Activated B cell treated with CpG ODN at 0.5 μM for 24 hours (primary cell): ENCODE measurements at regions of chr5 and their contacts with region 1.

Region 1: GRCh38 chr5:176508603-176509002 is 28.6 kb downstream of the RNF44 start:
- DNase-seq: no peak
- ATAC-seq: no peak
- H3K4me3 Mint-ChIP-seq: no peak overlapping the region
- H3K27ac Mint-ChIP-seq: no peak overlapping the region
- H3K4me1 Mint-ChIP-seq: no peaks in the 10 kb centered on the region
- H3K27me3 Mint-ChIP-seq: no peaks in the 10 kb centered on the region
- CTCF ChIP-seq: no peak

Region 2: GRCh38 chr5:176415231-176415951 is 93.2 kb before region 1 on chr5:
- CTCF ChIA-PET with region 1: no interaction called
- POLR2A ChIA-PET with region 1: no interaction called
- intact Hi-C with region 1: no loop called
- DNase-seq: no peak
- ATAC-seq: no peak
- H3K4me3 Mint-ChIP-seq: peak overlapping the region; percentile 80
- H3K27ac Mint-ChIP-seq: peak overlapping the region; percentile 56
- H3K4me1 Mint-ChIP-seq: peaks cover 26% of the 10 kb centered on the region
- H3K27me3 Mint-ChIP-seq: peaks cover 3% of the 10 kb centered on the region
- CTCF ChIP-seq: no peak

Region 3: DNA sequence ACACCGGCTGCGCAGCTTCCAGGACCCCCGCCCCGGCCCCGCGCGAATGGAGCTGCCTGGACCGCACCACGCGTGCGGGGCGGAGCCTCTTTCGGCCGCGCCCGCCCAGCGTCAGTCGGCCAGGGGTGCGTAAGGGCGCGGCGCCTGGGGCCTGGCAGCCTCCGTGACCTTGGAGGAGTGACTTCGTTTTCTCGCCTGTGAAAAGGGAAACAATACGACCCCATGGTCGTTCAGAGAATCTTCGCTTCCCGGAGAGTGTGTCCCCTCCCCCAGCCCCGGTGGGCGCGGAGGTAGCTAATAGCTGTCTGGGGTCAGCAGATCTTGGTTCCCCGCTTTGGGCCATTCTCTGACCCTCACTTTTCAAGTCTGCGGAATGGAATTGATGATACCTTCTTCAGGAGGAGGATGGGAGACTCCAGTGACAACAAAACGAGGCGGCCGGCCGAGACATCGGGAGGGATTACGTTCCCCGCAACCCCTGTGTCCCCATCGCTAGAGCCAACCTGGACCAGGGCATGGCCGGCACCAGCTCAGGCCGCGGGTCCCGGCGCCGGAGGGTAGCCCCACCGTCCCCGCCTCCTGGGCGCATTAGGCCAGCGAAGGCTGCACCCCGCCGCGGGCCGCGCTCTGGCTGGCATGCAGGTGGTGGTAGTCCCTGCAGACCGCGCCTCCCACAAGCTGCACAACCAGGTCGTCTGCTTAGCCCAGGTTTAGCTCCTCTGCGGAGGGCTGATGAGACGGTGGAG is 35.0 kb after region 1 on chr5:
- CTCF ChIA-PET with region 1: no interaction called
- POLR2A ChIA-PET with region 1: no interaction called
- intact Hi-C with region 1: loop called (anchors 5 kb)
- DNase-seq: peak; percentile 76
- ATAC-seq: peak; percentile 80
- H3K4me3 Mint-ChIP-seq: peak overlapping the region; percentile 93
- H3K27ac Mint-ChIP-seq: peak overlapping the region; percentile 94
- H3K4me1 Mint-ChIP-seq: peaks cover 44% of the 10 kb centered on the region
- H3K27me3 Mint-ChIP-seq: no peaks in the 10 kb centered on the region
- CTCF ChIP-seq: no peak

Region 4: GRCh38 chr5:176609724-176610434 is 101.3 kb after region 1 on chr5 and contains the start of gene GPRIN1:
- CTCF ChIA-PET with region 1: no interaction called
- POLR2A ChIA-PET with region 1: no interaction called
- intact Hi-C with region 1: no loop called
- DNase-seq: peak; percentile 82
- ATAC-seq: peak; percentile 74
- H3K4me3 Mint-ChIP-seq: peak within 1 kb of the TSS; percentile 87
- H3K27ac Mint-ChIP-seq: peak within 1 kb of the TSS; percentile 65
- H3K4me1 Mint-ChIP-seq: peaks cover 10% of the 10 kb centered on the region
- H3K27me3 Mint-ChIP-seq: peaks cover 18% of the 10 kb centered on the region
- CTCF ChIP-seq: no peak
- total RNA-seq, gene GPRIN1: 2.8 and 3.2 TPM in 2 replicates